ENCODE measurements at regions of chr20 and their contacts with region 1.

Region 1: DNA sequence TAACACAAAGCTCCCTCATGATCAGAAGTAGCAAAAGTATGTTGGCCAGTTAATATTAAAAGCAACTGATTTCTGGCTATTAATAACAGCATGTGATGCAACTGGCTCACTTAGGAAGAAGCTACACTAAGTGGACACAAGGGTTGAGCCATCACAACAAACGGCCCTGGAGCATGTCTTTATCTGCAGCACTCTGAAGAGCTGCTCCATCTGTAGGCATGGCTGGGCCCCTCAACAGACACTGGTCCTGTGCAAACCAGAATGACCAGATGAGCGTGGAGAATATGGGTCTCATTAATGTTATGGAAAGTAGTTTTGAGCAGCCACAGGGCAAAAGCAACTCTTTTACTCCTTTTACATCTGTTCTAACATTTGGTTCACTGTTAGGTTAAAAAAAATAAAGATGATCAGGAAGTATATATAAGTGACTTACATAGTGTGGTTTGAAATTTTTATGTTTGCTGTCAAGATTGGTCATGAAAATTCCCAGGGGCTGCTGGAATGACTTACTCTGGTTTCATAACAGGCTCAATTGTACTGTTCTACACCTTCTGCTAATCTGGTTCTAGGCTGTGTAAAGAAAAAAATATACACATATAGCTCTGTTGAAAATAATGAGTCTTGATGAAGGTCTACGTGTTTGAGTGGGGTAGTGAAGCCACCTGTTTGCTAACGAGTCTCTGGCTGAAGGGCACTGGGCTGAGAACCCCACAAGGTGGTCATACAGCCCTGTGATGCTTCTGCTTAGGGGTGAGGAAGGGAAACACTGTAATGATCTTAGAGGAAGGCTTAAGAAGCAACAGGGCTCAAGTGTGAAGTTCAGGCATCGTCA is 58.1 kb downstream of the INSM1 start:
- DNase-seq: no peak
- H3K4me3 Mint-ChIP-seq: no peak overlapping the region
- H3K27ac Mint-ChIP-seq: peak overlapping the region; percentile 87
- H3K4me1 Mint-ChIP-seq: peaks cover 47% of the 10 kb centered on the region
- H3K27me3 Mint-ChIP-seq: no peaks in the 10 kb centered on the region

Region 2: GRCh38 chr20:20404633-20405032 is 21.4 kb before region 1 on chr20:
- intact Hi-C with region 1: no loop called
- DNase-seq: no peak
- H3K4me3 Mint-ChIP-seq: no peak overlapping the region
- H3K27ac Mint-ChIP-seq: peak overlapping the region; percentile 40
- H3K4me1 Mint-ChIP-seq: peaks cover 8% of the 10 kb centered on the region
- H3K27me3 Mint-ChIP-seq: no peaks in the 10 kb centered on the region

Region 3: DNA sequence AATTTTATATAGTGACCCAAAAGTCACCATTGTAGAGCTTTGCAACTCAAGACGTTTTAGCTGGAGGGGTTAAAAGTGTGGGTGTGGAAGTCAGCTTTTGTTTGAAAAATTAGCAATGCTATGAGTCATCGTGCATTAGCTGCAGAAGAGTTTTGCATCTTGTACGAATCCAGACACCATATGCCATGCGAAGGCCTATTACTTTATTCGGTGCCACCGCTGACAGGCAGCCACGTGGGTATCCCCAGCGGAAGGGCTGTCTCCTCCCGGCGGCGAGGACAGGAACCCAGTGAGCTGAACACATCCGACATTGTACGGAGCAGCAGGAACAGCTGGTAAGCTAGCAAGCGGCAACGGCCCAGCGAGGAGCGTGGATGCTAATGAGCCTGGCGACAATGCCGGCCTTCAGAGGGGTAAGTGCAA is 26.2 kb after region 1 on chr20:
- intact Hi-C with region 1: loop called (anchors 2 kb)
- DNase-seq: peak; percentile 39
- H3K4me3 Mint-ChIP-seq: peak overlapping the region; percentile 82
- H3K27ac Mint-ChIP-seq: peak overlapping the region; percentile 82
- H3K4me1 Mint-ChIP-seq: peaks cover 43% of the 10 kb centered on the region
- H3K27me3 Mint-ChIP-seq: no peaks in the 10 kb centered on the region

Measured in activated T-helper 2 cell treated with anti-CD3 and anti-CD28 coated beads, Interferon-gamma antibody, Interleukin-2, Interleukin-4, amounts not matched to agents 10 μg/mL and 5 μg/mL and 100 μg/mL, durations not matched to agents 14 hours and 24 hours and 36 hours (primary cell).